PC-3 (cell line): ENCODE measurements at regions of chr16 and their contacts with region 1.

Region 1: DNA sequence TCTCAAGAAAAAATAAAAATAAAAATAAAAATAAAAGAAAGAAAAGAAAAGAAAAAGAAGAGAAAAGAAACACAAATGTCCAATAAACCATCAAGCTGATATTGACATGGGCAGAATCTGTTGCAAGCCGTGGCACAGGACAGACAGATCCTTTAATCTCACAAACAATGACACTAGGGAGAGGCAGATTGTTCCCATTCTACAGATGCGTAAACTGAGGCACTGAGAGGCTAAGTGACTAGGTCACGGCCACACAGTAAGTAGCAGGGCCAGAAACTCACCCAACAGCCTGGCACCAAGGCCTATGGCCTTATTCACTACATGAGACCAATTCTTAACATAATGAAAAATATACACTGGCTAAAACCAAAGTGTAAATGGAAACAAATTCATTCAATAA is 28.3 kb upstream of the ZFP90 start:
- DNase-seq: no peak
- ATAC-seq: no peak
- H3K4me3 ChIP-seq: no peak overlapping the region
- H3K27ac ChIP-seq: no peak overlapping the region
- H3K4me1 ChIP-seq: no peaks in the 10 kb centered on the region
- H3K27me3 ChIP-seq: no peaks in the 10 kb centered on the region
- CTCF ChIP-seq: no peak

Region 2: DNA sequence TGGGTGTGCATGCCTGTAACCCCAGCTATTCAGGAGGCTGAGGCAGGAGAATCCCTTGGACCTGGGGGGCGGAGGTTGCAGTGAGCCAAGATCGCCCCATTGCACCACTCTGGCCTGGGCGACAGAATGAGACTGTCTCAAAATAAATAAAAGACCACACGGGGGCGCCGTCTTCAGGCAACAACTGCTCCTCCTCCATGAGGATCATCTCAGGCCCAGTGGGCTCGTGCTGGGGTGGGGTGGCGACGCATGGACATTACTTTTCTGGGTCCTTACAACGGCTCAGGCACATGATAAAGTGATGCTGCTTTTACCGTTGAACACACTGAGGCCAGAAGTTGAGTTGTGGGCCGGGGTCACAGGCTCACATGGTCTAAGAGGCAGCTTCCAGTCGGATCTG is 143.7 kb before region 1 on chr16:
- CTCF ChIA-PET with region 1: no interaction called
- POLR2A ChIA-PET with region 1: no interaction called
- intact Hi-C with region 1: loop called (anchors 1 kb)
- DNase-seq: peak; percentile 35
- ATAC-seq: no peak; the same call in 1 of the 2 replicates
- H3K4me3 ChIP-seq: no peak overlapping the region
- H3K27ac ChIP-seq: no peak overlapping the region
- H3K4me1 ChIP-seq: no peaks in the 10 kb centered on the region
- H3K27me3 ChIP-seq: no peaks in the 10 kb centered on the region
- CTCF ChIP-seq: peak; percentile 37

Region 3: DNA sequence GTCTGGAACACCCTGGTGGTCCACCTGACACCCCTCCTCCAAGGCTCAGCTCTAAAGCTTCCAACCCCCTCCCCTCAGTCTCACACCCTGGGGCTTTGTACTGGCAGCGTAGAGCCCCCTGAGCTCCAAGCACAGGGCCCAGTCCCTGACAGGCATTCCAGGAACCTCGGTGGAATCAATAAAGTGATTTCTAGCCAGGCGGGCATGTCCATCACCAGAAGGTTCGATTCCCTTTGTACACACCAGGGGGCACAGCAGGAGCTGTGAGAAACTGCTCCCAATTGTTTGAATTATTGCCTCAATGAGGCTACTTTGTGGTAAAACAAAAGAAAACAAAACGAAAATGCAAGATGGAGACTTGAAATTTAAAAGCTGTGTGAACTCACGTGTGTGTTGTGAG is 114.3 kb before region 1 on chr16:
- CTCF ChIA-PET with region 1: no interaction called
- POLR2A ChIA-PET with region 1: no interaction called
- intact Hi-C with region 1: loop called (anchors 1 kb)
- DNase-seq: peak; percentile 55
- ATAC-seq: peak; percentile 37; the same call in 1 of the 2 replicates
- H3K4me3 ChIP-seq: no peak overlapping the region
- H3K27ac ChIP-seq: no peak overlapping the region
- H3K4me1 ChIP-seq: no peaks in the 10 kb centered on the region
- H3K27me3 ChIP-seq: no peaks in the 10 kb centered on the region
- CTCF ChIP-seq: peak; percentile 66

Region 4: GRCh38 chr16:68445458-68445857 is 65.3 kb before region 1 on chr16:
- CTCF ChIA-PET with region 1: no interaction called
- POLR2A ChIA-PET with region 1: no interaction called
- intact Hi-C with region 1: loop called (anchors 1 kb)
- DNase-seq: peak; percentile 68
- ATAC-seq: no peak
- H3K4me3 ChIP-seq: no peak overlapping the region
- H3K27ac ChIP-seq: no peak overlapping the region
- H3K4me1 ChIP-seq: no peaks in the 10 kb centered on the region; the same call in 1 of the 2 replicates
- H3K27me3 ChIP-seq: no peaks in the 10 kb centered on the region
- CTCF ChIP-seq: peak; percentile 69

Region 5: DNA sequence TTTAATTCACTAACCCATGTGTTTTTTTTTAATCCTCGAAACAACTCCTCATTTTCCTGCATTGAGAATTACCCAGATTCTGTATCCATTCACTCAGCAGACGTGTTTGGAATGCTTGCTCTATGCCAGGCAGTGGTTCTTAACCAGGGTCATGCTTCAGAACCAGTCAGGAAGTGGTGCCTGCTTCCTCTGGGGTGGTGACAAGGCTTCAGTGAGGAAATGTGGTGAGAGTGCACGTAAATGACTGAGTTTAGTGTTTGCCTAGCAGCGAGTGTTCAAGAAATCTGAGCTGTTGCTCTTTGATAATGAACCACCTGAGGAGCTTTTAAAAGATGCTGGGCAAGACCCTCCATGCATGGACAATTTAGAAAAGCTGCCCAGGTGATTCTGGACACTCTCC is 38.2 kb after region 1 on chr16:
- CTCF ChIA-PET with region 1: no interaction called
- POLR2A ChIA-PET with region 1: no interaction called
- intact Hi-C with region 1: no loop called
- DNase-seq: no peak
- ATAC-seq: no peak
- H3K4me3 ChIP-seq: no peak overlapping the region
- H3K27ac ChIP-seq: no peak overlapping the region
- H3K4me1 ChIP-seq: no peaks in the 10 kb centered on the region
- H3K27me3 ChIP-seq: no peaks in the 10 kb centered on the region
- CTCF ChIP-seq: no peak